PC-9 (cell line): ENCODE measurements at regions of chr5 and their contacts with region 1.

Region 1: GRCh38 chr5:171907725-171908343 is 98.6 kb downstream of the FBXW11 start:
- DNase-seq: peak; percentile 37 to 56
- H3K4me3 ChIP-seq: no peak overlapping the region
- H3K27ac ChIP-seq: no peak overlapping the region
- H3K4me1 ChIP-seq: no peaks in the 10 kb centered on the region
- H3K27me3 ChIP-seq: no peaks in the 10 kb centered on the region
- CTCF ChIP-seq: peak; percentile 87

Region 2: GRCh38 chr5:170747851-170748250 is 1160.0 kb before region 1 on chr5:
- CTCF ChIA-PET with region 1: no interaction called
- POLR2A ChIA-PET with region 1: no interaction called
- intact Hi-C with region 1: loop called (anchors 10 kb)
- DNase-seq: no peak
- H3K4me3 ChIP-seq: no peak overlapping the region
- H3K27ac ChIP-seq: peak overlapping the region; percentile 96
- H3K4me1 ChIP-seq: peaks cover 78% of the 10 kb centered on the region
- H3K27me3 ChIP-seq: no peaks in the 10 kb centered on the region
- CTCF ChIP-seq: peak; percentile 58

Region 3: GRCh38 chr5:171630027-171630669 is 277.7 kb before region 1 on chr5:
- CTCF ChIA-PET with region 1: no interaction called
- POLR2A ChIA-PET with region 1: no interaction called
- intact Hi-C with region 1: loop called (anchors 5 kb)
- DNase-seq: peak in 1 of 2 experiments; percentile 60
- H3K4me3 ChIP-seq: peak overlapping the region; percentile 30; the same call in 1 of the 2 replicates
- H3K27ac ChIP-seq: no peak overlapping the region
- H3K4me1 ChIP-seq: peaks cover 26% of the 10 kb centered on the region
- H3K27me3 ChIP-seq: no peaks in the 10 kb centered on the region
- CTCF ChIP-seq: peak; percentile 55

Region 4: DNA sequence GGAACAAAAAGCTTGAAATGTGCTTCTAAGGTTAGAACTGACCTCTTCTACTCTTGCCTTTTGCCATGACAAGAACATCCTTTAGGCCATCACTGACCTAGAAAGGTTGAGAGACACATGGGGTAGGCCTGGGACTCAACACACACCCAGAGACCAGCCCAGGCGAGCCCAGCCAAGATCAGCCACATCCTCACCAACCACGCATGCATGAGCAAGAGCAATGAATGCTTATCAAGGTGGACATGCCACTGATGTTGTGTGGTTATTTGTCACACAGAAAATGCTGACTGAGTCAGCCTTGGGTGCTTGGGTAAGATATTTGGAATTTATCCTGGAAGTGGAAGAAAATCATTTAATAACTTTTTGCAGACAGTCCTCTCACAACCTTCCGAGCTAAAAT is 82.8 kb before region 1 on chr5:
- CTCF ChIA-PET with region 1: no interaction called
- POLR2A ChIA-PET with region 1: no interaction called
- intact Hi-C with region 1: no loop called
- DNase-seq: no peak
- H3K4me3 ChIP-seq: no peak overlapping the region
- H3K27ac ChIP-seq: no peak overlapping the region
- H3K4me1 ChIP-seq: no peaks in the 10 kb centered on the region
- H3K27me3 ChIP-seq: no peaks in the 10 kb centered on the region
- CTCF ChIP-seq: no peak

Region 5: GRCh38 chr5:172035039-172035438 is 127.2 kb after region 1 on chr5:
- CTCF ChIA-PET with region 1: no interaction called
- POLR2A ChIA-PET with region 1: no interaction called
- intact Hi-C with region 1: loop called (anchors 1 kb)
- DNase-seq: no peak
- H3K4me3 ChIP-seq: no peak overlapping the region
- H3K27ac ChIP-seq: no peak overlapping the region
- H3K4me1 ChIP-seq: no peaks in the 10 kb centered on the region
- H3K27me3 ChIP-seq: no peaks in the 10 kb centered on the region
- CTCF ChIP-seq: no peak

Region 6: DNA sequence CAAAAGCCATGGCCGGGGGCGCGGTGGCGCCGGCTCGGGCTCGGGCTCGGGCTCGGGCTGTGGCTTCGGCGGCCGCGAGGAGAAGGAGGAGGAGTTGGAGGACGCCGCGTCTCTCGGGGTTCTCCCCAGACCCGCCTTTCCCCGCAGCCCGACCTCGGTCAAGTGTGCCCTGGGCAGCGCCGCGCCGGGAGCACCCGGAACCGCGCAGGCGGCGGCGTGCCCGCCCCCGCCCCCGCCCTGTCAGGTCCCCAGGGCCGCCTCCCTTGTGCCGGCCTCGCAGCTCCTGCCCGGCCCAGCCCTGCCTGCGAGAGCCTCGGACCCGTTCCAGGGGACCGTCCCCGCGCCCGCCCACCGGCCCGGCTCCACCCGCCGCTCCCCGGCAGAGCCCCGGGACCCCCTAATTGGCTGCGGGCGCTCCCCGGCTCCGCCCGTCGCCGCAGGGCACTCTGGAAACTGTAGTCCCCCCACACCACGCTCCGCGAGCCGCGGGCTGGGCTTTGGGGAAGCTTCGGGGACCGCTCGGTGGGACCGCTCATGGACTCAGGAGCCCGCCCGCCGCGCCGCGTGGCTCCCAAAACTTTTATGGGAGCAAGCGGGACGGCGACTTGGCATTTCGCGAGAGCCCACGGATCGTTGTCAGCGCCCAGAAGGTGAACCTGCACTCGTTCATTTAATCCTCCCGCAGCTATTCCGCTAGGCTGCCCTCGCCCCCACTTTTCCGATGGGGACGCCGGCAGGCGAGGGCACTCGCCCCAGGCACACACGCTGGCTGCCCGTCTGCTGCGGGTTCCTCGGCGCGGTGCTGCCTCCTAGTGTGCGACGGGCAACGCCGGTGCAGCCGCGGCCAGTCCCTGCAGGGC is 280.4 kb after region 1 on chr5 and contains the start of gene STK10:
- CTCF ChIA-PET with region 1: no interaction called
- POLR2A ChIA-PET with region 1: no interaction called
- intact Hi-C with region 1: loop called (anchors 1 kb)
- DNase-seq: peak; percentile 71 to 93
- H3K4me3 ChIP-seq: peak within 1 kb of the TSS; percentile 67
- H3K27ac ChIP-seq: peak within 1 kb of the TSS; percentile 65
- H3K4me1 ChIP-seq: peaks cover 21% of the 10 kb centered on the region
- H3K27me3 ChIP-seq: no peaks in the 10 kb centered on the region
- CTCF ChIP-seq: peak; percentile 81
- total RNA-seq, gene STK10: 23.3 and 31.5 TPM in 2 replicates

Region 7: GRCh38 chr5:172697123-172698121 is 789.6 kb after region 1 on chr5:
- CTCF ChIA-PET with region 1: no interaction called
- POLR2A ChIA-PET with region 1: no interaction called
- intact Hi-C with region 1: loop called (anchors 1 kb)
- DNase-seq: peak; percentile 70 to 89
- H3K4me3 ChIP-seq: peak overlapping the region; percentile 64
- H3K27ac ChIP-seq: no peak overlapping the region
- H3K4me1 ChIP-seq: no peaks in the 10 kb centered on the region
- H3K27me3 ChIP-seq: peaks cover 15% of the 10 kb centered on the region
- CTCF ChIP-seq: peak; percentile 93